Sigmoid colon (tissue), 7 donors: ENCODE measurements at regions of chr3 and their contacts with region 1.

Region 1: GRCh38 chr3:79361748-79362378 is 405.9 kb downstream of the ROBO1 start:
- DNase-seq: no peak
- H3K4me3 ChIP-seq: peak overlapping the region in 1 of 4 donors; percentile 9
- H3K27ac ChIP-seq: peak overlapping the region in 1 of 4 donors; percentile 17
- H3K4me1 ChIP-seq: peaks cover 0 to 55% (median 23%) of the 10 kb centered on the region in 4 donors
- H3K27me3 ChIP-seq: no peaks in the 10 kb centered on the region
- CTCF ChIP-seq: peak; percentile 41 to 79 (median 60)
- EP300 ChIP-seq: no peak
- POLR2A ChIP-seq: no peak

Region 2: GRCh38 chr3:78659386-78659987 is 702.4 kb before region 1 on chr3:
- intact Hi-C with region 1: loop called (anchors 5 kb)
- DNase-seq: no peak
- H3K4me3 ChIP-seq: no peak overlapping the region
- H3K27ac ChIP-seq: no peak overlapping the region
- H3K4me1 ChIP-seq: no peaks in the 10 kb centered on the region
- H3K27me3 ChIP-seq: no peaks in the 10 kb centered on the region
- CTCF ChIP-seq: peak; percentile 31 to 66 (median 56)
- EP300 ChIP-seq: no peak
- POLR2A ChIP-seq: no peak

Region 3: DNA sequence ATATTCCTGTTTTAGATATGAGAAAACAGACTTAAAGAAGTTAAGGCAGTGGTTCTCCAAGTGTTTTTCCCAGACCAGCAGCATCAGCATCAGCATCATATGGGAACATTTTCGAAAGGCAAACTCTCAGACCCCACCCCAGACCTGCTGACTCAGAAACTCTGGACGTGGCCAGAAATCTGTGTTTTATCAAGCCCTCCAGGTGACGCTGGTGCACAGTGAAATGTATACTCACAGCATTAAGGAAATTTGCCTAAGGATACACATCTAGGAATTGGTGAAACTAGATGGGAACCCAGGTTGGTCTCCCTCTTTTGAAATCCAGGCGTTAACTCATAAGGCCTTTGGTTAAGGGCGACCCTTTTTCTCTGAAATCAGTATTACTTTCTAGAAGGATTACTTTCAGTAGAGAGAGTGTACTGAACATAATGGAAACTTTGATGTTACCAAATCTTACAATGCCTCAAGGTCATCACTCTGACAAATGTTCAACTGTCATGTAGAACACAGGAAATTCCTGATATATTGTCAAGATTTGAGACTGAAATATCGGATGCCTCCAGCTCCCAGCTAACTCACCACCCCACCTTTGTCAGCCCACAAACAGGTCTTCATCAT is 504.3 kb before region 1 on chr3:
- intact Hi-C with region 1: loop called (anchors 5 kb)
- DNase-seq: no peak
- H3K4me3 ChIP-seq: no peak overlapping the region
- H3K27ac ChIP-seq: no peak overlapping the region
- H3K4me1 ChIP-seq: peaks cover 0 to 26% (median 13%) of the 10 kb centered on the region in 4 donors
- H3K27me3 ChIP-seq: no peaks in the 10 kb centered on the region
- CTCF ChIP-seq: peak in 3 of 4 experiments; percentile 6 to 17 (median 11)
- EP300 ChIP-seq: no peak
- POLR2A ChIP-seq: no peak

Region 4: DNA sequence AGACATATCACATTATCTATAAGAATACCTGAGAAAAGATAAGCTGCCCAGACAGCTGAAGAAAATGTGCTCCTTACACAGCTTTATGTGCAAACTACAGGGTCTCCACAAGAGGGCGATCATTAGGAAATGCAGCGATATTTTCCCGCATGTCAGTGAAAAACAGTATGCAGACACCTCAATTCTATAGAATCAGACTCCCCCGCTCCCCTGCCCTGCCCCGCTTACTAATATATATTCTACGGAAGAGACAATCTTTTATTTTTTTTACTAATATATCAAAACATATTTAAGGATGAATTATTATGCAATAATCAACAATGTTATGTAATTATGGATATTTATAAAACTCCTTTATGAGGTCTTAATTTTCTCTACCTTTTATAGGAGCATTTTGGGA is 275.3 kb before region 1 on chr3:
- intact Hi-C with region 1: loop called (anchors 2 kb)
- DNase-seq: peak; percentile 62
- H3K4me3 ChIP-seq: no peak overlapping the region
- H3K27ac ChIP-seq: no peak overlapping the region
- H3K4me1 ChIP-seq: peaks cover 0 to 19% (median 4%) of the 10 kb centered on the region in 4 donors
- H3K27me3 ChIP-seq: no peaks in the 10 kb centered on the region
- CTCF ChIP-seq: peak in 3 of 4 experiments; percentile 34 to 76 (median 74)
- EP300 ChIP-seq: no peak
- POLR2A ChIP-seq: no peak